Tibial artery (tissue), 4 donors: ENCODE measurements at regions of chr12 and their contacts with region 1.

Region 1: DNA sequence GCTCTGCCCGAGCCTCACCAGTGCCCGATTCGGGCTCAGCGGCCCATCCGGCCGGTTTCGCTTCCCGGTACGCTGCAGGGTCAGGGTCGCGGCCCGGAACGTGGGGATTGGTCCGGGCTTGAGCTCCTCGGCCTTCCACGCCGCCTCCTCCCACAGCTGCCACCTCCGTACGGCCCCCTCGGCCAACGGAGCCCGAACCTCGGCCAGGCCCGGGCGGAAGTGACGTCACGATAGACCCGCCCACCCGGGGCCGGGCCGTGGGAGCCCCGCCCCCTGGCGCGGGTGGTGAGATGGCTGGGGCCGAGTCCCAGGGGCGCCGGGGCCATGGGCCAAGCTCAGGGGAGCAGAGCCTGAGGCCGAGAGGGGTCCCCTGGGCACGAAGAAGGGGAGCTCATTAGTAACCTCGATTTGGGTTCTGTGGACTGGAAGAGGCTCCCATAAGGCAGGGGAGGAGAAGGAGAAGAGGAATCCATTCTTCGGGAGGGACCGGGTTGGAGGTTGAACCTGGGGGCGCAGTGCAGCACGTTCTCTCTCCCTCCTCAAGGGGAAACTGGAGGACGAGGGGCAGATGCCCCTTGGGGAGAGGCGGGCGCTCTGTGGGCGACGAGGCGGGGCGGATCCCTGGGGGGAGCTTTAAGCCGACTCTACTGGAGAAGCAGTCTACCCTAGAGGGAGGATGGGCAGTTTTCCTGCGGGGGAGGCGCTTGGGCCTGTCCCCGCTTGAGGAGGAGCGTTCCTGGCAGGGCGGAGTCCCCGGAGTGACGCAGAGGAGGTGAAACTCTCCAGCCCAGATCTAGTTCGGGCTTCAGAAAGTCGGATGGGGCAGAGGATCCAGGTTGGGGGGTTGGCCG is at the start of gene MLF2:
- DNase-seq: peak; percentile 98 to 100
- H3K4me3 ChIP-seq: peak within 1 kb of the TSS; percentile 83 to 98
- H3K27ac ChIP-seq: peak within 1 kb of the TSS; percentile 98
- H3K4me1 ChIP-seq: peaks cover 0 to 19% (median 13%) of the 10 kb centered on the region in 4 donors
- H3K27me3 ChIP-seq: no peaks in the 10 kb centered on the region
- CTCF ChIP-seq: peak in 1 of 2 experiments; percentile 94

Region 2: DNA sequence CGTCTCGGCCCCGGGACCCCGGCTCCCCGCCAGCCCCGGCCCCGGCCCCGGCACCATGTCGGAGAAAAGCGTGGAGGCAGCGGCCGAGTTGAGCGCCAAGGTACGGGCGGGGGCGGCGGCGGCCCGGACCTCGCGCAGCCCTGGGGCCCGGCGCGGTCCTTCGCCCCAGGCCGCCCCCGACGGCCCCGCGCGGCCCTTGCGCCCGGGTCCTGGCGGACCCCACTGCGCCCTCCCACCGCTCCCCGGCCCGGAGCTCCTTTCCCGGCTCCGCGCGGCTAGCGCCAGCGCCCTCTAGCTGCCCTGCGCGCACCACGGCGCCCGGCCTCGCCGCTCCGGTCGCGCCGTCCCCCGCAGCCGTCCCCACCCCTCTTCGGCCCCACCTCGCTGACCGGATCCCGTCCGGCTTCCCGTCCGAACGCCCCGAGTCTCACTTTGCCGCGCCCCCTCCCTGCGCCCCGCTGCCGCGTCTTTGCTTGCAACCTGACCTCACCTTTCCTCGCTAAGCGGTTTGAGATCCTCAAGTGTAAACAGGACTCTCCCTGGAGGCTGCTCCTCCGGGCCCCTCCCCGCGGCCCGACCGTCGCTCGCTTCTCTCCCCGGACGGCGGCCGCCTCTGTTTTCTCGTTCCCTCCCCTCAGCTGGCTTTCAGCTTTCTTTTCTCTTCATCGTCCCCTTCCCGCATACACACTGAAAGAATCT is 13.7 kb after region 1 on chr12:
- intact Hi-C with region 1: loop called (anchors 2 kb)
- DNase-seq: peak; percentile 77 to 93
- H3K4me3 ChIP-seq: peak overlapping the region; percentile 85 to 93
- H3K27ac ChIP-seq: peak overlapping the region; percentile 85 to 97
- H3K4me1 ChIP-seq: peaks cover 0 to 60% (median 41%) of the 10 kb centered on the region in 4 donors
- H3K27me3 ChIP-seq: no peaks in the 10 kb centered on the region
- CTCF ChIP-seq: peak; percentile 68 to 70

Region 3: DNA sequence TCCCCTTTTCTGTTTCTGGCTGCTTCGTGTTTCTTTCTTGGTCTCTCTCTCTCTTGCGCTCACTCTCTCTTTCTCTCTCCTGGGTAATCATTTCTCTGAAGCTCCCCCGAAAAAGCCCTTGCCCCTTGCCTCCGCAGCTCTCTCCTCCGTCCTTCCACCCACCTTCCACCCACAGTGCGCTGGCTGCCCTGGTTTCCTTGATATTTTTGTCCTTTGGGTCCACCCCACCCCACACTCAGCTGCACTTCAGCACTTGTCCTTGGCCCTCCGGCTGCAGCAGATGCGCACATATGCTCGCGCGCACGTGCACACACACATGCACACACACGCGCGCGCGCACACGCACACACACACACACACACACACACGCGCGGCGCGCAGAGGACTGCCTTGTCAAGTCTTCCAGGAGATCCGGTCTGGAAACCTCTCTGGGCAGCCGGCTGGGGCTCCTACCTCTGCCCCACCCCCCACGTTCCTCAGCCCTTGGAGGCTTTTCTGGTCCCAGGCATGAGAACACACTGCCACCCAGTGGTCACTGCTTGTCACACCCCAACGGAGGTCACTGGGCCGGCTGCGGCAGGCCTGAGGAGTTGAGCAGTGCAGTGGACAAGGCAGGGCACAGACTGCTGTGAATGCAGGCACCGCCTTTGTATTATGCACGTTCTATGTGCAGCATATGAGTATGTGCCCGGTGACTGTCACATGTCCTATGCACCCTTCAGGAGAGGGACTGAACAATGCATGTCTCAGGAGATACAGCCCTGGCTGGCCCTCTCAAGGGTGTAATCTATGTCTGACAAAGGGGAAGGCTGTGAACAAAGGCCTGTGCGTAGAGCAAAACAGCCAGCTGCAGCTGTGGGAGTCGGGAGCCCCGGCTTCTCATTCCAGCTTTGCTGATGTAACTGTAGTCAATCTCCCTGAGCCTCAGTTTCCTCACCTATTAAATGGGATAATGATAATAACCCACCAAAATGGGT is 25.7 kb after region 1 on chr12:
- intact Hi-C with region 1: loop called (anchors 2 kb)
- DNase-seq: peak; percentile 94 to 96
- H3K4me3 ChIP-seq: peak overlapping the region; percentile 46 to 56
- H3K27ac ChIP-seq: peak overlapping the region; percentile 77 to 82
- H3K4me1 ChIP-seq: peaks cover 0 to 19% (median 11%) of the 10 kb centered on the region in 4 donors
- H3K27me3 ChIP-seq: no peaks in the 10 kb centered on the region
- CTCF ChIP-seq: peak; percentile 89 to 98

Region 4: GRCh38 chr12:6825398-6826124 is 72.4 kb after region 1 on chr12:
- intact Hi-C with region 1: loop called (anchors 5 kb)
- DNase-seq: peak; percentile 77 to 89
- H3K4me3 ChIP-seq: no peak overlapping the region
- H3K27ac ChIP-seq: no peak overlapping the region
- H3K4me1 ChIP-seq: peaks cover 0 to 54% (median 44%) of the 10 kb centered on the region in 4 donors
- H3K27me3 ChIP-seq: peaks cover 0 to 43% of the 10 kb centered on the region in 2 donors
- CTCF ChIP-seq: peak; percentile 86 to 90